ENCODE measurements at regions of chr6 and their contacts with region 1.

Region 1: GRCh38 chr6:17289630-17290061 is 8.5 kb downstream of the RBM24 start:
- DNase-seq: no peak
- H3K4me3 ChIP-seq: no peak overlapping the region
- H3K27me3 ChIP-seq: no peaks in the 10 kb centered on the region
- CTCF ChIP-seq: no peak

Region 2: GRCh38 chr6:16947375-16948015 is 342.2 kb before region 1 on chr6:
- CTCF ChIA-PET with region 1: no interaction called
- POLR2A ChIA-PET with region 1: no interaction called
- DNase-seq: peak; percentile 100
- H3K4me3 ChIP-seq: no peak overlapping the region
- H3K27me3 ChIP-seq: no peaks in the 10 kb centered on the region
- CTCF ChIP-seq: no peak

Region 3: GRCh38 chr6:18277237-18278006 is 987.8 kb after region 1 on chr6:
- CTCF ChIA-PET with region 1: no interaction called
- POLR2A ChIA-PET with region 1: interaction called, 14 read pairs
- DNase-seq: no peak
- H3K4me3 ChIP-seq: peak overlapping the region; percentile 53
- H3K27me3 ChIP-seq: peaks cover 14% of the 10 kb centered on the region
- CTCF ChIP-seq: no peak